AG04450 (cell line): ENCODE measurements at regions of chr20 and their contacts with region 1.

Region 1: DNA sequence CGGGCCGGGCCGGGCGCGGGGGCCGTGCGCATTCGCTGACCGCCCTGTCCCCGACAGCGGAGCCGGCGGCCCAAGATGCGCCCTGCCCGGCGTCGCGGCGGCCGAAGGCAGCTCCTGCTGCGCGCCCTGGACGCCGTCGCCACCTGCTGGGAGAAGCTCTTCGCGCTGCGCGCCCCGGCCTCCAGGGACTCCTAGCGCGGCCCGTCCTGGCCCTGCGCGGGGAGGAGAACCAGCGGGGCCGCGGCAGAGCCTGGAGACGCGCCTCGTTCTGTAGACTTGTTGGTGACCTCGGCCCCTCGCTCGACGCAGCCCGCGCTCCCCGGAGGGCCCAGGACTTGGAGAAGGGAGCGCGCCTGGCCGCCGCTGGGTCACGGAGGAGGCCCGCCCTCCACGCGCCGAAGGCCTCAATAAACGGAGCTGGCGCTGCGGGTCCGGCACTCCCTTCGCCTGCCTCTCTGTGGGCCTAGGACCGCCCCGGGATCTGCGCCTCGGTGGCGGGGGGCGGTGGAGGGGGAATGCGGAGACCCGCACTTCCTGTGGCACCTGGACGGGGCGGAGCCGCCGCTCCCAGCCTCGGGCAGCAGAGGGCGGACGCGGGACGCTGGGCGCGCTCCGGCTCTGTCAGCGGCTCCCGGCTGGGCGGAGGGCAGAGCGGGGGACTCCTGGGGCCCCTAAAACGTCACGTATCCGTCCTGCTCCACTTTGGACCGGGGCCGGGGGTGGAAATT is 2.7 kb downstream of the C20orf204 start:
- DNase-seq: no peak
- H3K4me3 ChIP-seq: peak overlapping the region; percentile 43
- H3K27ac ChIP-seq: no peak overlapping the region
- H3K27me3 ChIP-seq: peaks cover 52% of the 10 kb centered on the region
- CTCF ChIP-seq: peak; percentile 56

Region 2: DNA sequence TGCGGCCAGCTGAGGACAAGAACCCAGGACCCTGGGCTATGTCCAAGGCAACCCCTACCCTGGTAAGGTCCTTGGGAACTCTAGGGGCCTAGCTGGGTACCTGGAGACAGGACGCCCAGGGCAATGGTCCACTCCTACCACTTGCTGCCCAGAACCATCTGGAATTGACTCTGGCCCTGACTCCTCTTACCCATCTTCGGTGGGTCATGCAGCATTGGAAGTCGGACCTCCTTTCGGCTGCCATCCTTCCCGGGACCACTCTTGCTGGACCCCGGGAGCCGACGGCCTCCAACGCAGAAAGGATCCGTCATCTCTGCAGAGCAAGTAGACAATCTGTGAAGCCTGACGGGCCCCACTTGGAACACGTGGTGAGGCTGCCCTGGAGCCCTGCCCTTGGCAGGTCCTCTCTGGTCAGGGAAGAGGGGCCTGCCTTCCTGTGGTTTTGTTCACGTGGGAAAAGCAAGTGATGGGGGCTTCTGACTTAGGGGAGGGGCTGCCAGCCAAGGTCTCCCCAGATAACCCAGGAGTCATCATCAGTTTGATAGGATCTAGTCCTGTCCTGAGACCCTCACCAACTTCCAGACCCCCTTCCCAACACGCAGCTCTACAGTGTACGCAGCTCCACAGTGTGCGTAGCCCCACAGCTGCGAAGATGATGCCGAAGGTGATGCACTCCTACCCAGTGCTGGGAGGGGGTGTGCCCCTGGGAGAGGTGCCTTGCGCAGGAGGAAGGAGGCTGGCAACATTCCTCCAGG is 70.9 kb before region 1 on chr20:
- CTCF ChIA-PET with region 1: no interaction called
- POLR2A ChIA-PET with region 1: no interaction called
- DNase-seq: no peak
- H3K4me3 ChIP-seq: no peak overlapping the region; the same call in 1 of the 2 replicates
- H3K27ac ChIP-seq: no peak overlapping the region
- H3K27me3 ChIP-seq: no peaks in the 10 kb centered on the region
- CTCF ChIP-seq: no peak

Region 3: GRCh38 chr20:64003960-64004725 is 34.6 kb before region 1 on chr20:
- CTCF ChIA-PET with region 1: no interaction called
- POLR2A ChIA-PET with region 1: no interaction called
- DNase-seq: no peak
- H3K4me3 ChIP-seq: no peak overlapping the region
- H3K27ac ChIP-seq: no peak overlapping the region
- H3K27me3 ChIP-seq: no peaks in the 10 kb centered on the region
- CTCF ChIP-seq: no peak

Region 4: GRCh38 chr20:64119681-64120341 is 81.1 kb after region 1 on chr20:
- CTCF ChIA-PET with region 1: interaction called, 31 read pairs
- POLR2A ChIA-PET with region 1: no interaction called
- DNase-seq: no peak
- H3K4me3 ChIP-seq: no peak overlapping the region
- H3K27ac ChIP-seq: no peak overlapping the region
- H3K27me3 ChIP-seq: peaks cover 22% of the 10 kb centered on the region
- CTCF ChIP-seq: no peak